GM10248 (cell line): ENCODE measurements at regions of chr19 and their contacts with region 1.

Region 1: DNA sequence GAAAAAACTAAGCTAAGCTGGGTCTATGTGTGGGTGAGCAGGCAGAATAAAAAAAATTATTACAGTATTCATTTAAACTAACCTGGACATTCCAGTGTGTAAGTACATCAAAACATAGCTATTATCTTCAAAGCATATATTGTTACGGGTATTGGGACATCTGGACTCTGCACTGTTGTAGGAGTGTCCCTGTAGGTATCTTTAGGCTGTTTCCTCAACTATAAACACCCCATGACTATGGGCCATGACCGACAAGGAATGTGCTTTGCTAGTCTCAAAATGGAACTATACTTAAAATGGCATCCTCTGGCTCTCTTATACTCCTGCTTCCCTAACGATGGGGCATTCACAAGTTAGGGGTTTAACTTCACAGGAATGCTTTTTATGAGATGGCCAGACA is 3.4 kb downstream of the SCGB2B2 start:
- DNase-seq: no peak
- CTCF ChIP-seq: no peak

Region 2: DNA sequence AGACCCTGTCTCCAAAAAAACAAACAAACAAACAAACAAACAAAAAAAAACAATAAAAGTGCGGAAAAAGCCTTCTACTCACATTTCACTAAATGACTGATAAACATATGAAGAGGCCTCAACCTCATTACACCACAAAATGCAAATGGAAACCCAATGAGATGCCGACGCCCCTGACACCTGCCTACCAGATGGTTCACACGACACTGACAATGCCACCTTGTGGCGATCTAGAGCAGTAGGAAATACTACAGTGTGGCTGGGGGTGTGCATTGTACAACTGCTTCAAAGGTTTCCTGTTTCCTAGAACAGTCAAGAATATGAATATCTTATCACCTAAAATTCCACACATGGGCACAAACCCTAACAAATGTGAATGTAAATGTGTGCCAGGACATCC is 10.7 kb before region 1 on chr19:
- CTCF ChIA-PET with region 1: interaction called, 14 read pairs
- POLR2A ChIA-PET with region 1: no interaction called
- DNase-seq: no peak
- CTCF ChIP-seq: peak; percentile 20